ENCODE measurements at regions of chr17 and their contacts with region 1.

Region 1: GRCh38 chr17:80575057-80575875 is 30.6 kb downstream of the RPTOR start:
- DNase-seq: peak; percentile 87
- H3K4me3 ChIP-seq: no peak overlapping the region
- H3K27ac ChIP-seq: no peak overlapping the region
- H3K4me1 ChIP-seq: no peaks in the 10 kb centered on the region
- H3K27me3 ChIP-seq: no peaks in the 10 kb centered on the region
- CTCF ChIP-seq: peak; percentile 100
- POLR2A ChIP-seq: no peak

Region 2: GRCh38 chr17:79276821-79277220 is 1298.4 kb before region 1 on chr17:
- CTCF ChIA-PET with region 1: no interaction called
- POLR2A ChIA-PET with region 1: no interaction called
- dilution Hi-C with region 1: no loop called
- intact Hi-C with region 1: no loop called
- DNase-seq: no peak
- H3K4me3 ChIP-seq: no peak overlapping the region
- H3K27ac ChIP-seq: no peak overlapping the region
- H3K4me1 ChIP-seq: no peaks in the 10 kb centered on the region
- H3K27me3 ChIP-seq: no peaks in the 10 kb centered on the region
- CTCF ChIP-seq: no peak
- POLR2A ChIP-seq: no peak

Region 3: GRCh38 chr17:80454557-80455335 is 120.5 kb before region 1 on chr17:
- CTCF ChIA-PET with region 1: interaction called, 12 read pairs
- POLR2A ChIA-PET with region 1: no interaction called
- dilution Hi-C with region 1: no loop called
- intact Hi-C with region 1: no loop called
- DNase-seq: peak; percentile 94
- H3K4me3 ChIP-seq: peak overlapping the region; percentile 40 to 69 (median 56)
- H3K27ac ChIP-seq: peak overlapping the region; percentile 72
- H3K4me1 ChIP-seq: peaks cover 9% of the 10 kb centered on the region
- H3K27me3 ChIP-seq: peaks cover 0 to 6% of the 10 kb centered on the region in 2 experiments
- CTCF ChIP-seq: no peak
- POLR2A ChIP-seq: peak; percentile 97

Region 4: DNA sequence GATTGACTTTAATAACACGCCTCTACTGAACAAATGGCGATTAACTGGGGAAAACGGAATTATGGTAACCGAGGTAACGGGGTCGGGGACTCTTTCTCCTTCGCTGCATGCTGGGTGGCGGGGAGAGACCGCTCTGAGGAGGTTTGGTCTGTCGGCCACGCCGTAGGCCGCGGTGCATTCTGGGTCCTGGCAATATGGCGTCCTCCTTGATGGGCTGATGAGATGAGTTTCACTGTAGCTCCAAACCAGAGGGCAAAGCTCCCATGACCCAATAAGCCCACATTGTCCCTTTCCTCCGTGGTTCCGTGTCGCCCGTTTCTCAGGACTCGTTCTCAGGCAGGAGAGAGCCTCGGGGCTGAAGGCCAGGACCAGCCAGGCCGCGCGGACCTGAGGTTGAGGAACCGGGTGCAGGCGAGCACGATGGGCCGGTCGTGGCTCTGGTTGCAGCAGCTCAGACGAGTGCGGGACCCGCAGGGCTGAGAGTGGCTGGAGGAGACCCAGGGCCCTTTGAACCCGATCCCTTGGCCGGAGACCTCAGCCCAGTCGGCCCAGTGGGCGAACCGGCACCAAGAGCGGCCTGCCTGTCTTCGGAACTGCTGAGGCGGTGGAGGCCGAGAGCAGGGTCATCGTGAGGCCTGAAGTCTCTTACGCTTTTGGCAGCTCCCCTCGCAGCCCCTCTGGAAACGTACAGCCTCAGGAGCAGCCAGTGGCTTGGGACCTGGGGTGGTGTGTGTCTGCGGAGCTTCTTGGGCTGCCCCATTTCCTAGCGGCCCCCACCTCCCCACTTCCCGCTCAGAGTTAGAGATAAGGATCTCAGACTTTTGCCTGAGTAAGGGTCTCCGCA is 30.4 kb before region 1 on chr17 and contains the start of gene RPTOR:
- CTCF ChIA-PET with region 1: interaction called, 5 read pairs
- POLR2A ChIA-PET with region 1: no interaction called
- dilution Hi-C with region 1: no loop called
- intact Hi-C with region 1: loop called (anchors 2 kb)
- DNase-seq: peak; percentile 95
- H3K4me3 ChIP-seq: peak within 1 kb of the TSS; percentile 72 to 86 (median 78)
- H3K27ac ChIP-seq: peak within 1 kb of the TSS; percentile 76
- H3K4me1 ChIP-seq: peaks cover 12% of the 10 kb centered on the region
- H3K27me3 ChIP-seq: no peaks in the 10 kb centered on the region
- CTCF ChIP-seq: no peak
- POLR2A ChIP-seq: peak; percentile 63
- total RNA-seq, gene RPTOR: 37.0 and 41.8 TPM in 2 replicates

Region 5: DNA sequence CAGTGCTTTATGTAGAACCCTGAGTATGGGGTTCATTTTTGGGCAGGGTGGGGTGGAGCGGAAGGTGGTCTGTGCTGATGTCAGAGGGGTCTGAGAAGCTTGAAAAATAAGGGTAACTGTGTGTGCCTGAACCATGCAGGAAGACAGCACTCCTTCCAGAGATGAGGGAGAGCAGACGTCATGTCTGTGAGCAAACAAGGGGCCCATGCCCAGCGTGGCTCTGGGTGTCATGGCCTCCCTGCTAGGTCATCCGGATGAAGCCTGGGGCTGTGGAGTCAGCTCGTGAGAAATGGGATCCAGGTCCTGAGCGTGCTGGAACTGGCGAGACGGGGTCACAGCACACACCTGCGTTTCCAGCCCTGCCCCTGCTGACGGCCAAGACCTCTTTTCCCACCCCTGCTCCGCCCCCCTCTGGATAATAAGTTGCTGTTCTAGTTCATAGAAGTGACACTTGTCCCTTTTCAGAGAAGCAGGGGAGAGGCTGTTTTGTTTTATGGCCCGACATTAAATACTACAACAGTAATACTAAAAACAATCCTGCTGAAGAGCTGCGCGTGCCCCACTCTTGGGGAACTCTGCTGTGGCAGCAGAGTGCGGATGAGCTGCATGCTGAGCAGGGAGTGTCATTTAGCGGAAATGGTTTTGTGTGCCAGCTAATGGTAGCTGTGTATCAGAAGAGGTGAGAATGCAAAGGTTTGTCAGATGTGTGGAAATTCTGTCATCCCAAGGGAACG is 61.9 kb after region 1 on chr17:
- CTCF ChIA-PET with region 1: no interaction called
- POLR2A ChIA-PET with region 1: no interaction called
- dilution Hi-C with region 1: no loop called
- intact Hi-C with region 1: no loop called
- DNase-seq: no peak
- H3K4me3 ChIP-seq: no peak overlapping the region
- H3K27ac ChIP-seq: no peak overlapping the region
- H3K4me1 ChIP-seq: no peaks in the 10 kb centered on the region
- H3K27me3 ChIP-seq: no peaks in the 10 kb centered on the region
- CTCF ChIP-seq: no peak
- POLR2A ChIP-seq: no peak

Region 6: GRCh38 chr17:80649678-80650672 is 74.7 kb after region 1 on chr17:
- CTCF ChIA-PET with region 1: interaction called, 3 read pairs
- POLR2A ChIA-PET with region 1: no interaction called
- dilution Hi-C with region 1: no loop called
- intact Hi-C with region 1: loop called (anchors 2 kb)
- DNase-seq: peak; percentile 55
- H3K4me3 ChIP-seq: no peak overlapping the region
- H3K27ac ChIP-seq: peak overlapping the region; percentile 31
- H3K4me1 ChIP-seq: peaks cover 9% of the 10 kb centered on the region
- H3K27me3 ChIP-seq: no peaks in the 10 kb centered on the region
- CTCF ChIP-seq: peak; percentile 73 to 84
- POLR2A ChIP-seq: no peak

Region 7: GRCh38 chr17:80663781-80664206 is 88.5 kb after region 1 on chr17:
- CTCF ChIA-PET with region 1: no interaction called
- POLR2A ChIA-PET with region 1: no interaction called
- dilution Hi-C with region 1: no loop called
- intact Hi-C with region 1: no loop called
- DNase-seq: no peak
- H3K4me3 ChIP-seq: no peak overlapping the region
- H3K27ac ChIP-seq: no peak overlapping the region
- H3K4me1 ChIP-seq: no peaks in the 10 kb centered on the region
- H3K27me3 ChIP-seq: no peaks in the 10 kb centered on the region
- CTCF ChIP-seq: no peak
- POLR2A ChIP-seq: no peak

Region 8: DNA sequence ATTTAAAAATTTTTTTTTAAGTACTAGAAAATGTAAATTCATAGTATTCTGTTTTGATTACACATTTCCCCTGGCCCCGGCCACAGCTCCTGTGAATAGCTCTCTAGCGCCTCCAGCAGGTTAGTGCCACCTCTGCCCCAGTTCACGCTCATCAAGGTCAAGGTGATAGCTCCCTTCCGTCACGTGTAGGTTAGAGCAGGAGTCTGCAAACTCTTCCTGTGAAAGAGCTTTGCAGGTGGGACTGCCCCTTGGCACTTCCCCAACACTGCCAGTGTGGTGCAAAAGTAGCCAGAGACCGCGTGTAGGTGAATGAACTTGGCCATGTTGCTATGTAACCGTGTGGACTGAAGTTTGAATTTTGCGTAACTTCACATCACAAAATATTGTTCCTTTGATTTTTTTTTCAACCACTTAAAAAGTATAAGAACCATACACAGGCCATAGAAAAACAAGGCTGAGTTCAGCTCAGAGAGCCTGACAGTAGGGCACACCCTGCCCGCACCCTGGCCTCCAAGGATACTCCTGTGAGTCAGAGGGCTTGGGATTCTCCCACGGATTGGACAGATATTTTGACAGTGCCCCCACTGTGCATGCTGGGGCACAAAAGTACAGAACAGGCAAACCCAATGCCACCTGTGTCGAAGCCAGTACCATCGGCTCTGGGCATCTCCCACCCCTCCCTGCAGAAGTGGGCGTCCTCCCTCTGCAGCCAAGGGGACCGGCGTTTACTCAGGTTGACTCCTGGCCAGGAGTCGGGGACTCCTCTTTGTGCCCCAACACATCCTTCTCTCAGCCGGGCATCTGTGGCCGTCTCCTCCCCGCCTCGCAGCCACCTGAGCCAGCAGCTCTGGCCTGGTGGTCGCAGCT is 324.4 kb after region 1 on chr17:
- CTCF ChIA-PET with region 1: interaction called, 11 read pairs
- POLR2A ChIA-PET with region 1: no interaction called
- dilution Hi-C with region 1: no loop called
- intact Hi-C with region 1: loop called (anchors 1 kb)
- DNase-seq: peak; percentile 22
- H3K4me3 ChIP-seq: no peak overlapping the region
- H3K27ac ChIP-seq: no peak overlapping the region
- H3K4me1 ChIP-seq: peaks cover 18% of the 10 kb centered on the region
- H3K27me3 ChIP-seq: no peaks in the 10 kb centered on the region
- CTCF ChIP-seq: peak; percentile 53 to 69
- POLR2A ChIP-seq: no peak

Measured in endothelial cell of umbilical vein (primary cell).